Transverse colon (tissue), 4 donors: ENCODE measurements at regions of chr7 and their contacts with region 1.

Region 1: GRCh38 chr7:156356556-156356955 is 284.0 kb upstream of the RNF32 start:
- DNase-seq: no peak
- H3K4me3 ChIP-seq: no peak overlapping the region
- H3K27ac ChIP-seq: no peak overlapping the region
- H3K4me1 ChIP-seq: no peaks in the 10 kb centered on the region
- H3K27me3 ChIP-seq: no peaks in the 10 kb centered on the region
- CTCF ChIP-seq: no peak
- EP300 ChIP-seq: no peak
- POLR2A ChIP-seq: no peak

Region 2: DNA sequence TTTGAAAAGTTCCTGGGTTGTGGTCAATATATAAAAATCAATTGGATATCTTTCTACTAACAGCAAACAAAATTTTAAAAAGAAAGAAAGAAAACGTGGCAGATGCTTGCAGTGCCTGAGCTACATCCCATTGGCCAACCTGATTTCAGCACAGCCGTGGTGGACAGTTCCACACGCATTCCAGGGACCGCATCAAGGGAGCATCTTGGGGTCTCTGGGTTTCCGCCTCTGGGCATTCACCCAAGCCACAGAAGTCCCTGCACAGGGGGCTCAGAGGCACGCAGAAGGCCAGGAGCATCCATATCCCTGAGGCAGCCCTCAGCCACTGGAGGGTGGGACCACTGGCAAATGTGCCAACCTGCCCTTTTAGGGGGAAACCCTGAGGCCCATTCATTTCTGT is 29.5 kb after region 1 on chr7:
- in situ Hi-C with region 1: no loop called
- intact Hi-C with region 1: loop called (anchors 1 kb)
- DNase-seq: no peak
- H3K4me3 ChIP-seq: no peak overlapping the region
- H3K27ac ChIP-seq: no peak overlapping the region
- H3K4me1 ChIP-seq: no peaks in the 10 kb centered on the region
- H3K27me3 ChIP-seq: no peaks in the 10 kb centered on the region
- CTCF ChIP-seq: no peak
- EP300 ChIP-seq: no peak
- POLR2A ChIP-seq: no peak